ENCODE measurements at regions of chrX and their contacts with region 1.

Region 1: GRCh38 chrX:65985922-65986588 is 53.8 kb downstream of the VSIG4 start:
- DNase-seq: peak; percentile 12 to 23
- H3K4me3 ChIP-seq: no peak overlapping the region
- H3K27ac ChIP-seq: no peak overlapping the region
- H3K4me1 ChIP-seq: no peaks in the 10 kb centered on the region
- H3K27me3 ChIP-seq: no peaks in the 10 kb centered on the region
- CTCF ChIP-seq: peak; percentile 41 to 56 (median 50)
- POLR2A ChIP-seq: no peak

Region 2: GRCh38 chrX:65581661-65582339 is 404.3 kb before region 1 on chrX:
- intact Hi-C with region 1: loop called (anchors 5 kb)
- DNase-seq: peak; percentile 61 to 70
- H3K4me3 ChIP-seq: no peak overlapping the region
- H3K27ac ChIP-seq: no peak overlapping the region
- H3K4me1 ChIP-seq: no peaks in the 10 kb centered on the region
- H3K27me3 ChIP-seq: no peaks in the 10 kb centered on the region
- CTCF ChIP-seq: peak; percentile 67 to 86 (median 76)
- POLR2A ChIP-seq: no peak

Region 3: GRCh38 chrX:65920659-65921066 is 65.4 kb before region 1 on chrX:
- intact Hi-C with region 1: no loop called
- DNase-seq: no peak
- H3K4me3 ChIP-seq: no peak overlapping the region
- H3K27ac ChIP-seq: no peak overlapping the region
- H3K4me1 ChIP-seq: no peaks in the 10 kb centered on the region
- H3K27me3 ChIP-seq: no peaks in the 10 kb centered on the region
- CTCF ChIP-seq: no peak
- POLR2A ChIP-seq: no peak

Region 4: DNA sequence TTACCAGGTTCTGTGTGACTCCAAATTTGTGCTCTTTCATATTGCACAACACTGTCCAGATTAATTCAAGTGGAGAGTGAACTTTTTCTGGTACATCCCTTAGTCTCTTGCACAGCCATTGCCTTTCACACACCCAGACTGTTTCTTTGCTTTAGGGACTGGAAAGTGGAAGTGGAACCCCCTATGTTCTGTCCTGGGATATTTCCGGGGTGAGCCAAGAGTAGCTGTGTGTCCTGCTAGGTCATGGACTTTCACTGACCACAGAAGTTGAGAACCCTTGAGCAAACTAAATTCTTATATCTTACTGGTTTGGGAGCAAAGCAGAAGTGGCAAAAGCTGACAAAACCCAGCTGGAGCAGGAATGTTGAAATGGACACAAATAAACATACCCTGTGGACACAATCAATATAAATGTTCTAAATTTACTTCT is 64.1 kb after region 1 on chrX:
- intact Hi-C with region 1: no loop called
- DNase-seq: no peak
- H3K4me3 ChIP-seq: no peak overlapping the region
- H3K27ac ChIP-seq: no peak overlapping the region
- H3K4me1 ChIP-seq: no peaks in the 10 kb centered on the region
- H3K27me3 ChIP-seq: no peaks in the 10 kb centered on the region
- CTCF ChIP-seq: no peak
- POLR2A ChIP-seq: no peak

Measured in uterus (tissue), 4 donors.